ENCODE measurements at regions of chr2 and their contacts with region 1.

Region 1: DNA sequence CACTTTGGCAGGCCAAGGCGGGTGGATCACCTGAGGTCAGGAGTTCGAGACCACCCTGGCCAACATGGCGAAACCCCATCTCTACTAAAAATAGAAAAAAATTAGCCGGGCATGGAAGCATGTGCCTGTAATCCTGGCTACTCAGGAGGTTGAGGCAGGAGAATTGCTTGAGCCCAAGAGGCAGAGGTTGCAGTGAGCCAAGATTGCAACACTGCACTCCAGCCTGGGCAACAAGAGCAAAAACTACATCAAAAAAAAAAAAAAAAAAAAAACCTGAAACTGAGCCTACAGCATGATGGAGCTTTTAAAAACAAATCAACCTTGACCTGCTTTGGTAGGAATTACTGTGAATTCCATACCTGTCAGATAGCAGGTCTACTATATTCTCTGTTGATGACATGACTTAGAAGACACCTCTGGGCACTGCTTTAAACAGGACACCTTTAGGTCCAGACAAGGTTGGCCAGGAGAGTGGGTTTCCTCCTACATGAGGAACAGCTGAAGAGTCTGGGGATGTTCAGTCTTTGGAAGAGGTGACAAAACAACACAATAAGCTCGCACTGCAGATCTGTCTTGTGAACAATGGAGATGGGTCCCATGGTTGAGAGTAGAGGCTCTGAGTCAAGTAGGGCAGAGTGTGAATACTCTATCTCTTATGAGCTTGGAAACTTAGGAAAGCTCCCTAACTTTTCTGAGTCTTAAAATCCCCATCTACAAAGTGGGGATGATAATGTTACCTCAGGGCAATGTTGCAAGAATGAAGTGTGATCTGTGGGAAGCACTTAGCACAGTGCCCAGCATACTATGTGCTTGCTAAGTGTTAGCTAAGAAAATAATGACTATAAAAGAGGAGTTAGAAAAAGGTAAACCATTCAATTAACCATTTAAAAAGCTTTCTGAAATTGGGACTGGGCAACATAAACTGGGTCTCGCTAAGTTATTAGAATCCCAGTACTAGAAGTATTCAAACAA is 25.2 kb downstream of the TMEM163 start:
- DNase-seq: no peak
- H3K4me3 ChIP-seq: no peak overlapping the region
- H3K27ac ChIP-seq: no peak overlapping the region
- H3K4me1 ChIP-seq: no peaks in the 10 kb centered on the region
- H3K27me3 ChIP-seq: no peaks in the 10 kb centered on the region
- CTCF ChIP-seq: no peak
- EP300 ChIP-seq: no peak
- POLR2A ChIP-seq: no peak
- RAD21 ChIP-seq: no peak

Region 2: DNA sequence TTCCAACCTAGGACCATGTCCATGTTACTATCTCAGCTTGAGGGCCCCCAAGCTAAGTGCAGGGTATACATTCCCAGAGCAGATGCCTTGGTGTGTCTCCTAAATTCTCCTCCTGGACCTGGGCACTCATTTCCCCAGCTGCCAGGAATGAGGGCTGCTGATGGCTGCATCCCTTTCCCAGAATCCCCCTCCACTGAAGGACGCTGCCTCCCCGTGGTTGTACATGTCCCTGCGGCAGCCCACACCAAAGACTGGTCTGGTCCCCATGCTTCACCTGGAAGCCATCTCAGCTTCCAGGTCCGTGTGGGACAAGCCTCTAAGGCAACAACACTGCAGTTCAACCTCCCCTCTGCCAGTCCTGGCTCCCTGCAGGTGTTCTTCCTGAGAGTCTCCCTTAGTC is 10.5 kb after region 1 on chr2:
- CTCF ChIA-PET with region 1: interaction called, 11 read pairs
- POLR2A ChIA-PET with region 1: interaction called, 5 read pairs
- DNase-seq: no peak
- H3K4me3 ChIP-seq: no peak overlapping the region
- H3K27ac ChIP-seq: no peak overlapping the region
- H3K4me1 ChIP-seq: peaks cover 0 to 17% (median 11%) of the 10 kb centered on the region in 4 experiments; a peak in 6 of 7 replicates
- H3K27me3 ChIP-seq: no peaks in the 10 kb centered on the region
- CTCF ChIP-seq: peak; percentile 18 to 41 (median 38); a peak in 3 of 4 replicates
- EP300 ChIP-seq: no peak
- POLR2A ChIP-seq: no peak
- RAD21 ChIP-seq: 0 out of 4 replicates have a peak, but pooled peaks of 1 of the 2 experiments have one; percentile 2

Measured in H1 (cell line).